ENCODE measurements at regions of chr16 and their contacts with region 1.

Region 1: GRCh38 chr16:83826146-83826913 is 18.6 kb downstream of the HSBP1 start:
- DNase-seq: peak; percentile 95

Region 2: GRCh38 chr16:83747936-83748335 is 78.4 kb before region 1 on chr16:
- intact Hi-C with region 1: no loop called
- DNase-seq: no peak

Region 3: GRCh38 chr16:83878838-83879237 is 52.5 kb after region 1 on chr16:
- intact Hi-C with region 1: loop called in 1 of 2 experiments (anchors 5 kb)
- DNase-seq: no peak

Region 4: DNA sequence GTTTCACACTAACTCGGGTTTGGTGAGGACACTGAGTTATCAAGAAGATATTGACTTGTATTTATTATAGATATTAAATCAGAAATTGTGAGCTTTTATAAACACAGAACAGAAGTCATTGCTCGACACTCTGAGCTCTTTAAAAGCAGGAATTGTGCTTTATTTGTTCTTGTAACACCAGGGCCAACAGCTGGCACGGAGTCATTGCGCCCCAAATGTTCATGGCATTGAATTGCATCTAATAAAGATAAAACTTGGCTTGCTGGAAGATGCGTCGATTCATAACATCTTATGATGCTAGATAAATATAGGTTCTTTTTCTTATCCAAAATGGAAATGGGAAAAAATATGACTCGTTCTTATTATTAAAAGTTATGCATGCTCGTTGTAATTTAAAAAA is 60.8 kb after region 1 on chr16:
- intact Hi-C with region 1: loop called in 1 of 2 experiments (anchors 5 kb)
- DNase-seq: no peak

Region 5: DNA sequence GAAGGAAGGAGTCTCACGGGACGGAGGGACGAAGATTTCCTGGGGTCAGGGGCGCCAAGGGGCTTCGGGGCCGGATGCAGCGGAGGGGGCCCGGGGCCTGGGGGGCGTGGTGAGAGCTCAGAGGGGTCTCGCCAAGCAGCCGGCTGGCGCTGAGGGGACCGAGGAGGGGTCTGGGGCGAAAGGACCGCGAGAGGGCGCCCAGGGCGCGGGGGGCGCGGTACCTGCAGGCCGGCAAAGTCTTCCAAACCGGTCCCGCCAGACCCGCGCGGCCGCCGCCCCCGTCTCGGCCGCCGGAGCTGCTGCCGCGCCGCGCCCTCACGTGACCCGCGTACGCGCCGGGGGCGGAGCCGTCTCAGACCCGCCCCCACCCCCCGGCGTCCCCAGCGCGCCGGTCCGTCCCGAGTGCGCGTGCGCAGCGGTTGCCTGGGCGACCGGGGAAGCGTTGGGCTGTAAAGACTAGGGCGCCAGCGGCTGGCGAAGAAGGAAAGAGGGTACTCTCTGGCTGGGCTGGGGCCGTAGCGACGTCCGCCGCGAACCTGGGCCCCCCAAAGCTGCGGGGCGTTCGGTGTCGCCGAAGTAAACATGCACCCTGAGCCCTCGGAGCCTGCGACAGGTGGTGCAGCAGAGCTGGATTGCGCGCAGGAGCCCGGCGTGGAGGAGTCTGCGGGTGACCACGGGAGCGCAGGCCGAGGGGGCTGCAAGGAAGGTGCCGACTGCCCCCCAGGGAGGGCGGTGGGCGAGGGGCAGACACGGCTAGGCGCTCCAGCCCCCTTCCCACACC is 318.7 kb after region 1 on chr16 and contains the starts of genes DNAAF1 and HSDL1:
- intact Hi-C with region 1: no loop called
- DNase-seq: peak; percentile 97
- total RNA-seq, gene DNAAF1: not detected
- total RNA-seq, gene HSDL1: 10.1 to 21.2 TPM

Measured in posterior vena cava (tissue), 2 donors.